Ascending aorta (tissue), 2 donors: ENCODE measurements at regions of chr5 and their contacts with region 1.

Region 1: DNA sequence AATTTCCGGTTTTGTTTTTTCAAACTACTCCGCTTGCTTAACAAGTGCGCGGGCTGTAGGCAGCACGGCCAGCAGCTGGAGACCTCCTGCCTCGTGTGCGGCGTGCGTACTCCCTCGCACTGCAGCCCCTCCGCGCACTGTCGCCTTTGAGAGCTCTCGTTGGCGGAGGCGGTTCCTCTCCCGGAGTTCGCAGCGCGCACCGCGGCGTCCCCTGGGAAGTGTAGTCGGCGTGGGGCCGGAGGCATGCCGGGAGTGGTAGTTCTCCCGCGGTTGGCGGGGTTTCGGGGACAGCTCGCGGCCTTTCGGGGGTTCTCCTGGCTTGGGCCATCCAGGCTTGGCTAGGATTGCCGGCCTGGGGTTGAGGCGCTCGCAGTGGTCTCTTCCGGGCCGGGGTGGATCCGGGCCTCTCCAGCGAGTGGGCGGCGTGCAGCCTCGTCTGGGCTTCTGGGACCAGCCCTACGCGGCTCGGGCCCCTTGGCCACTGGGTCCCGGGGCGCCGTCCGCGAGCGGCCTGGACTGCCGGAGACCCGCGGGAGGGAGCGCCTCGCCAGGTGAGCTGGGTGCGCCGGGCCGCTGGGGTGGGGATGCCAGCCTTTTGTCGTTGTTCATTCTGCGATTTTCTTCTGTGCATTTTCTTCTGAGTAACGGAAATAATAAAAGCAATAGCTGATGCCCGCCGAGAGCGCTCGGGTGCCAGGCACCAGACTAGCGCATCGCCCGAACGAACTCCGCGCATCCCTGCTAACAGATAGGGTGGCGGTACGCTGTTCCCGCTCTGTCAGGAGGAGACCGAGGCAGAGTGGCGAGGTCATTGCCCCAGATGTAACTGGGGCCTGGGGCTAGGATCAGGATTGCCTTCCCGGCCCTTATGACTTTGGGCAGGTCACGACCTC is at the start of gene ZNF354C:
- DNase-seq: peak; percentile 29 to 93
- H3K4me3 ChIP-seq: peak within 1 kb of the TSS; percentile 73 to 92
- H3K27ac ChIP-seq: peak within 1 kb of the TSS; percentile 65 to 71
- H3K4me1 ChIP-seq: peaks cover 0 to 3% of the 10 kb centered on the region in 2 donors
- H3K27me3 ChIP-seq: no peaks in the 10 kb centered on the region
- CTCF ChIP-seq: no peak
- total RNA-seq, gene ZNF354C: 3.0 TPM

Region 2: DNA sequence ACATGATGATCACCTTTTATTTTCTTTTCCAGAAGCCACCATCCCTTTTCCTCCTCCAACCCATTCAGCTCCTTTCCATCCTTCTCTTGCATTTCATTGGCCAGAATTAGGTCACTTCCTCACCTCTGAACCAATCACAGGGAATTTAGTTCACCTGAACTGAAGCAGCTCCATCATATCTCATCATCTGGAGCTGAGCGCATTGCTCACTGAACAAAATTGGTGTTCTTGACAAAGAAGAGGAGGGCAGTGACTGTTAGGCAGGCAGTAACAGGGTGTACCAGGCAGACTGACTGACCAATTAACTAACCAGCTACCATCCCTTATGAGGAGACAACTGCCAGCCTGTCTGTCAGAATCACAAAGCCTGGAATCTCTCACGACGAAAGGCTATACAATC is 328.1 kb before region 1 on chr5:
- intact Hi-C with region 1: loop called (anchors 1 kb)
- DNase-seq: no peak
- H3K4me3 ChIP-seq: no peak overlapping the region
- H3K27ac ChIP-seq: no peak overlapping the region
- H3K4me1 ChIP-seq: peaks cover 2 to 3% of the 10 kb centered on the region in 2 donors
- H3K27me3 ChIP-seq: no peaks in the 10 kb centered on the region
- CTCF ChIP-seq: no peak

Region 3: DNA sequence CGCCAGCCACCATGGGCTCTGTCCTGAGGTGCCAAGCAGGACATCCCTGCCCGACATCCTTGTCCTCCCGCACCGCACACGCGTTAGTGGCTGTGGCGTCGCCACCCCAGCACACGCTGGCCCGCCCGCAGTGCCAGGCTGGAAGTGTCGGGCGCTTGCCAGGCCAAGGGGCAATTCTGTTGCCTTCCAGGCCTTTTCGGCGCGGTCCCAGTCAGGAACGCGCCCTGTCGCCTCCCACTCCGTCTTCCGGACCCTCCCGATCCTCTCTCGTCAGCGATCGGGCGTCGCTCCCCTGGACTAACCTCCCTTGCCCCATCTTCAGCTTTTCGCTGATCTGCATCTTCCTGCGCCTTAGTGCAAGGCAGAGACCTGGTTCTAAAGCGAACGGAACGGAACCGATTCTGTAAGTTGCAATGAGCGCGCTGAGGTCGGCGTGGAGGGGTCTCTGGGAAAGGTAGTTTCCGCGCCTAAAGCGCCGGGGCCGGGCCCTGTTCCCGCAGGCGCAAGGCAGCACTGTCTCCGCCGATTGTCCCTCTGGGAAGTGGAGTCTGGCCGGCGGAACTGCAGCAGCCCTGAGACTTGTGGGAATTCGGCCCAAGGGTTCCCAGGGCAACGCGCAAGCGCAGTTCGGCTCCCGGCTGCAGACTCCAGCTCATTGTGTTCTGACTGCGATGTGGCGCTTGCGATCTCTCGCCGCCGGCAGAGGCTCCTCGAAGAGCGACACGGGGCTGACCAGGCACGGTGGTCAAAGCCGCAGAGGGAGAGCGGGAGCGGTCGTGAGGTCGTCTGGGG is 119.6 kb before region 1 on chr5 and contains the start of gene ZNF454:
- intact Hi-C with region 1: loop called (anchors 10 kb)
- DNase-seq: peak; percentile 35 to 91
- H3K4me3 ChIP-seq: peak within 1 kb of the TSS; percentile 62 to 74
- H3K27ac ChIP-seq: peak within 1 kb of the TSS; percentile 73 to 84
- H3K4me1 ChIP-seq: peaks cover 0 to 4% of the 10 kb centered on the region in 2 donors
- H3K27me3 ChIP-seq: no peaks in the 10 kb centered on the region
- CTCF ChIP-seq: no peak
- total RNA-seq, gene ZNF454: 2.8 TPM

Region 4: DNA sequence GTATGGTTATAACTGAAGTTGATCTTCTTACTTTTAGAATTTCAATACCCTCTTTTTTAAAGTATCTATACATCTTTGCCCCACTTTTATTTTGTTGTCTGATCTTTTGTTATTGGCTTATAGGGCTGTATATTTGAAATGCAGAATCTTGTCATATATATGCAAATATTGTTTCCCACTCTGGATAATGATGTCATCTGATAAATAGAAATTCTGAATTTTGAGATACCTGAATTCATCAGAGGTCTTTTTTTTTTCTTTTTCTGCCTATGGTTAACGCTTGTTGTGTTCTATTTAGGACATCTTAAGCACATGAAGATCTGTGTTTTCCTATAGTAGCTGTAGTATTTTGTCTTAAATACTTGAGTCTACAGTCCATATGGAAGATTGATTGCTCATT is 101.6 kb before region 1 on chr5:
- intact Hi-C with region 1: no loop called
- DNase-seq: no peak
- H3K4me3 ChIP-seq: no peak overlapping the region
- H3K27ac ChIP-seq: no peak overlapping the region
- H3K4me1 ChIP-seq: no peaks in the 10 kb centered on the region
- H3K27me3 ChIP-seq: no peaks in the 10 kb centered on the region
- CTCF ChIP-seq: no peak

Region 5: GRCh38 chr5:179089502-179089901 is 29.1 kb after region 1 on chr5:
- intact Hi-C with region 1: no loop called
- DNase-seq: no peak
- H3K4me3 ChIP-seq: no peak overlapping the region
- H3K27ac ChIP-seq: no peak overlapping the region
- H3K4me1 ChIP-seq: no peaks in the 10 kb centered on the region
- H3K27me3 ChIP-seq: no peaks in the 10 kb centered on the region
- CTCF ChIP-seq: no peak